K562 (cell line): ENCODE measurements at regions of chr16 and their contacts with region 1.

Region 1: DNA sequence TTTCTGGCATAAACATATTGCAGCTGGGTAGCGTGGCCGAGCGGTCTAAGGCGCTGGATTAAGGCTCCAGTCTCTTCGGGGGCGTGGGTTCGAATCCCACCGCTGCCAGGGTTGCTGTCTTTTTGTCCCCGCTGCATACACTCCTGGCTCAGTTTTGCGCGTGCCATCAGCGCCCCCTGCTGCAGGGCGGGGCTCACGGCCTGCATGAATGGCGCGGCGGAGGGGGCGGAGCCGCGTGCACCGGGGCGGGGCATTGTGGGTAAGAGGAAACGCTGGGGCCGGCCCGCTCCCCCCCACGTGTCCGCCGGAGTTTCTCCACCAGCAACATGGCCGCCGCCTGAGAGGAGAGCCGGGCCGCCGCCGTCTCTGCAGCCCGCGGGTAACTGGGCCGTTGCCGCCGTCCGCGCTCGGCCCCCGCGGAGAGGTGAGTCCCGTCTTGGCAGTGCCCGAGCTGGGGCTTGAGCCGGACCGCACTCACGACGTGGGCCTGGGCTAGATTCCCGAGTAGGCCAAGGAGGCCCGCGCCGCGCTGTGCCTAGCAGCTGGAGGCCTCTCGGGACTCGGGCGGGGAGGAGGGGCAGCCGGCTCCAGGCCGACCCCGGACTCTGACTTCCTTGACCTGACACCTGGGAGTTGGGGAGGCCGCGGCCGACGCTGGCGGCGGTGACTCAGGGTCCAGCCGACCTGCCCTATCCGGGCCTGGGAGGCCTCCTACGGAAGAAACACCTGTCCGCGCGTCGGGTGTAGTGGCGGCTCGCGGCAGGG is at the start of gene POLR3E:
- DNase-seq: peak; percentile 95 to 99 (median 96)
- ATAC-seq: peak; percentile 90
- H3K4me3 ChIP-seq: peak within 1 kb of the TSS; percentile 96
- H3K27ac ChIP-seq: peak within 1 kb of the TSS; percentile 89
- H3K4me1 ChIP-seq: peaks cover 15% of the 10 kb centered on the region in 2 experiments; a peak in 4 of 5 replicates
- H3K27me3 ChIP-seq: no peaks in the 10 kb centered on the region
- CTCF ChIP-seq: peak; percentile 87 to 98 (median 94)
- EP300 ChIP-seq: peak; percentile 76
- POLR2A ChIP-seq: peak; percentile 83
- RAD21 ChIP-seq: peak; percentile 99
- polyA plus RNA-seq, gene POLR3E: 17.7 to 25.3 TPM

Region 2: DNA sequence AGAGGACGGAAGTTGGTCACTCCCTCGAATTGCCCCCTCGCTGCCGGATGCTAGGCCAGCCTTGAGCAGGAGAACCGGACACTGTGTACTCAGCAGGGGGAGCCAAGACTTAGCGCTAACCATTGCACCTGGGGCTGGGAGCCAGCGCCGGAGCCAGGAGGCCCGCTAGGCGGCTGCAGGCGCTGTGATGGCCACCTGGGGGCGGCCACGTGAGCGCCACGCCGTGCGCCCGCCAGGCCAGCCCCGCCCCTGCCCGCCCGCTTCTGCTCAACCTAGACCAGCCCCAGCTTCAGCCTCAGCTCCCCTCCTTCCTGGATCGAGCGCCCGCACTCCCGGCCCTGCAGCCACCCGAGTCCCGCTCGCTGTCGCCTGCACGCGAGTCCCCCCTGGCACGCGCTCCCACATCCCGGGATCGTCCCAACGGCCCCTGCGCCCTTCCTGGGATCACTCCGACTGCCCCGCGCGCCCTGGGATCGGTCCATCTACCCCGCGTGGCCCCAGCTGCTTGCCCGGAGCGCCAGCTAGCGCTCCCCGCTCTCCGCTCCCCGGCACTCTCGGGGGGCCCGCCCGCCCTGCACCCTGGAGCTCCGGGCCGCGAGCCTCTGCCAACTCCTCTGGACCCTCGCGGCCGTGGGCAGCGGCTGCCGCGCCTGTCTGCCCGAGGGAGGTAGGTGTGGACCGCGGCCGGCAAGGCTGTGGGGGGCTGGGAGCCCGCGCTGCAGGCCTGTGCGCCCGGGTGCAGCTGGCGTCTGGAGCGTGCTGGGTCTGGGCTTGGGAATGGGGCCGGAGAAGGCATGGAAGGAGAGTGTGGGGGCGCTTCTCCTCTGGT is 91.1 kb before region 1 on chr16 and contains the start of gene EEF2K:
- CTCF ChIA-PET with region 1: interaction called, 30 read pairs
- POLR2A ChIA-PET with region 1: interaction called, 9 read pairs
- in situ Hi-C with region 1: loop called (anchors 5 kb)
- intact Hi-C with region 1: loop called (anchors 1 kb)
- DNase-seq: peak; percentile 93 to 98 (median 94)
- ATAC-seq: peak; percentile 96
- H3K4me3 ChIP-seq: peak within 1 kb of the TSS; percentile 94
- H3K27ac ChIP-seq: peak within 1 kb of the TSS; percentile 86
- H3K4me1 ChIP-seq: peaks cover 13 to 24% of the 10 kb centered on the region in 2 experiments; a peak in 4 of 5 replicates
- H3K27me3 ChIP-seq: no peaks in the 10 kb centered on the region
- CTCF ChIP-seq: peak; percentile 90 to 99 (median 95)
- EP300 ChIP-seq: peak; percentile 65
- POLR2A ChIP-seq: no peak
- RAD21 ChIP-seq: peak; percentile 90 to 94
- polyA plus RNA-seq, gene EEF2K: 3.0 to 3.4 TPM

Region 3: DNA sequence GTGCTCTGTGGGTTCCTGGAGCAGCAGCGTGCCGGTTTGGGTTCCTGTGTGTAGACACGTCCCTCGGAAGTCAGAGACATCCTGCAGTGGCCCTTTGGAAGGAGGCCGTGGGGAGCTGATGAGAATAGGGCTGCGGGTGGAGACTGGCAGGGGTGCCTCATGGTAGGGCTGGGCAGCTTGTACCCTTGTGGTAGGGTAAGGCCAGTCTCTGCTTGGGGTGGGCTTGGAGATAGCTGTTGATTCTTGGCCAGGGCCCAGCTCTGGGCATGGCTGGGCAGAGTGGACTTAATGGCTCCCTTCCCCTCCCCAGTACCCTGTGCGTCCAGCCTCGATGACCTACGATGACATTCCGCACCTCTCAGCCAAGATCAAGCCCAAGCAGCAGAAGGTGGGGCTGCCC is 10.5 kb after region 1 on chr16:
- CTCF ChIA-PET with region 1: no interaction called
- POLR2A ChIA-PET with region 1: interaction called, 13 read pairs
- in situ Hi-C with region 1: no loop called
- intact Hi-C with region 1: no loop called
- DNase-seq: no peak
- ATAC-seq: no peak
- H3K4me3 ChIP-seq: no peak overlapping the region
- H3K27ac ChIP-seq: no peak overlapping the region
- H3K4me1 ChIP-seq: peaks cover 3 to 10% of the 10 kb centered on the region in 2 experiments; a peak in 3 of 5 replicates
- H3K27me3 ChIP-seq: no peaks in the 10 kb centered on the region
- CTCF ChIP-seq: no peak
- EP300 ChIP-seq: no peak
- POLR2A ChIP-seq: no peak
- RAD21 ChIP-seq: no peak

Region 4: DNA sequence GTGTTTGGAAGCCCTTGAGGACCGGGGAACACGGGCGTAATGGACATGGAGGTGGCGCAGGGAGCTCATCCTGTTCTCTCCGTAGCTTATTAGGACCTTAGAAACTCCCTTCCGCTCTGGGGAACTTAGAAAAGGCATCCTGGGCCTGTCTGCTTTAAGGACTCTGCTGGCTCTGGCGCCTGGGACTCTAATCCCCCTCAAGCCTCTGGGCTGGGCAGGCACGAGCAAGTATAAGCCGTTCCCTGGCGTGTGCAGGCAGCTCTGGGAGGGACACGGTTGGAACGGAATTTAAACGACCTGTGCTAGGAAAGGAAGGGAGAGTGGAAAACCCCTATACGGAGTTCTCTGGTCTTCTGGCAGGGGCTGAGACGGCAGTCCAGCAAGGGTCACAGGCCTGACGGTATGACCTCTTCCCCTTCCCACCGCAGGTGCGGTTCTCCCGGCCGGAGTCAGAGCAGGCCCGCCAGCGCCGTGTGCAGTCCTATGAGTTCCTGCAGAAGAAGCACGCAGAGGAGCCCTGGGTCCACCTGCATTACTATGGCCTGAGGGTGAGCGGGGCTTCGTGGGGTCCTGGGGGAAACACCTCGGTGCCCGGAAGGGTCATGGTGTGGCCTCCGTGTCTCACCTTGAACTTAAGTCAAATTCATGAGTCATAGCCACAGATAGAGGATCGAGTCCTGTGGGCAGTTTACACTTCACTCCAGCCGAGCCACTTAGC is 17.5 kb after region 1 on chr16:
- CTCF ChIA-PET with region 1: no interaction called
- POLR2A ChIA-PET with region 1: interaction called, 10 read pairs
- in situ Hi-C with region 1: no loop called
- intact Hi-C with region 1: no loop called
- DNase-seq: no peak
- ATAC-seq: no peak
- H3K4me3 ChIP-seq: no peak overlapping the region
- H3K27ac ChIP-seq: no peak overlapping the region
- H3K4me1 ChIP-seq: peaks cover 3 to 14% of the 10 kb centered on the region in 2 experiments; a peak in 3 of 5 replicates
- H3K27me3 ChIP-seq: no peaks in the 10 kb centered on the region
- CTCF ChIP-seq: no peak
- EP300 ChIP-seq: no peak
- POLR2A ChIP-seq: no peak; the same call in 1 of the 2 replicates
- RAD21 ChIP-seq: no peak

Region 5: GRCh38 chr16:22386976-22387375 is 89.7 kb after region 1 on chr16:
- CTCF ChIA-PET with region 1: no interaction called
- POLR2A ChIA-PET with region 1: no interaction called
- in situ Hi-C with region 1: no loop called
- intact Hi-C with region 1: no loop called
- DNase-seq: no peak
- ATAC-seq: no peak
- H3K4me3 ChIP-seq: no peak overlapping the region
- H3K27ac ChIP-seq: no peak overlapping the region
- H3K4me1 ChIP-seq: peaks cover 4 to 12% of the 10 kb centered on the region in 2 experiments; a peak in 4 of 5 replicates
- H3K27me3 ChIP-seq: no peaks in the 10 kb centered on the region
- CTCF ChIP-seq: no peak
- EP300 ChIP-seq: no peak
- POLR2A ChIP-seq: no peak
- RAD21 ChIP-seq: no peak